A673 (cell line): ENCODE measurements at regions of chr1 and their contacts with region 1.

Region 1: DNA sequence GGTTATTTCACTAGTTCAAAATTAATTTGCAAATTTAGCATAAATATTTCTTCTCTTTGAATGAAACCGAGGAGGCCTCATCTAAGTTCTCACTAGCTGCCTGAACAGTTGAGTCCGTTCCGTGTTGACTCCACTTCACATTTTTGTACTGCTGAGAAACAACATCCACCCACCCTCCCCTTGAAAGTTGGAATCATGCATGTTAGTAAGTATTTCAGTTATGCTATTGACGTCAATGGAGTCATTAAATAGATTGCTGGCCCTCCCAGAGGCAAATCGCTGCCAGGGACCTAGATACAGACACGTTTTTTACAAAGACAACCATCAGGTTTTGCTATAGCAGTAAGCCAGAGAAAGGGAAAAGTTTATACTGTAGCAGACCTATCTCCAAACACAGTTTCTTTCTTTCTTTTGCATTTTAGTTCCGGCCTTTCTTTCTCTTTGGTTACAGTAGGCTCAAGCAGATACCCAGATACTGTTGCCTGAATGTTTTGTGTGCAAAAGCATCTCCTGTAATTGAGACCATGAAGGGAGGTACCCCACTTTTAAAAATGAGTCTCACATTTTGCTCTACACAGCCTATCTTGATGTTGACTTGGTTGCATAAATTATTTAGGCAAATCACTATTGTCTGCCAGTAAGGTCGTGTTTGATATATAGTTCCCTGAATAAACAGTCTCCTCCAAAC is 262.6 kb upstream of the SGIP1 start:
- DNase-seq: peak; percentile 96
- H3K4me3 ChIP-seq: no peak overlapping the region
- H3K27ac ChIP-seq: peak overlapping the region; percentile 87
- H3K4me1 ChIP-seq: peaks cover 58% of the 10 kb centered on the region
- H3K27me3 ChIP-seq: no peaks in the 10 kb centered on the region
- CTCF ChIP-seq: no peak

Region 2: DNA sequence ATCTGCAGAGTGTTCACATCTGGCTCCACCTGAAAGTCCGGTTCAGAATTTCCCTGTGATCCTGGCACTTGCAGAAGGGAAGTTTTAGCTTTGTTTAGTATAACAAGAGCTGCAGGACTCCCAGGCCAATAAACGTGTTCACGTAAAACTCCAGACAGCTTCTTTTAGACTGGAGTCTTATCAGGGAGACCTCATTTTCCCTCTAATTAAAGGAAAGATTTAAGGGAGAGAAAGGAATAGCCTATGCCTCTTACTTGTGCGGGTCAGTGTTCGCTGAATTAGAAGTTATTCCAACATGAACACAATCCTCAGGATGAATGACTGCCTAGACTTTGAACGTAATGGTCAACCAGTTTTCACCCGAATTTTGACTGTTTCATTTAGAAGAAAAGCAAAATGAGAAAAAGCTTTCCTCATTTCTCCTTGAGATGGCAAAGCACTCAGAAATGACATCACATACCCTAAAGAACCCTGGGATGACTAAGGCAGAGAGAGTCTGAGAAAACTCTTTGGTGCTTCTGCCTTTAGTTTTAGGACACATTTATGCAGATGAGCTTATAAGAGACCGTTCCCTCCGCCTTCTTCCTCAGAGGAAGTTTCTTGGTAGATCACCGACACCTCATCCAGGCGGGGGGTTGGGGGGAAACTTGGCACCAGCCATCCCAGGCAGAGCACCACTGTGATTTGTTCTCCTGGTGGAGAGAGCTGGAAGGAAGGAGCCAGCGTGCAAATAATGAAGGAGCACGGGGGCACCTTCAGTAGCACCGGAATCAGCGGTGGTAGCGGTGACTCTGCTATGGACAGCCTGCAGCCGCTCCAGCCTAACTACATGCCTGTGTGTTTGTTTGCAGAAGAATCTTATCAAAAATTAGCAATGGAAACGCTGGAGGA is 60.5 kb after region 1 on chr1:
- CTCF ChIA-PET with region 1: no interaction called
- POLR2A ChIA-PET with region 1: interaction called, 4 read pairs
- intact Hi-C with region 1: loop called (anchors 1 kb)
- DNase-seq: peak; percentile 89
- H3K4me3 ChIP-seq: peak overlapping the region; percentile 54
- H3K27ac ChIP-seq: peak overlapping the region; percentile 84
- H3K4me1 ChIP-seq: peaks cover 50% of the 10 kb centered on the region
- H3K27me3 ChIP-seq: no peaks in the 10 kb centered on the region
- CTCF ChIP-seq: 0 out of 2 replicates have a peak, but pooled peaks have one; percentile 21

Region 3: DNA sequence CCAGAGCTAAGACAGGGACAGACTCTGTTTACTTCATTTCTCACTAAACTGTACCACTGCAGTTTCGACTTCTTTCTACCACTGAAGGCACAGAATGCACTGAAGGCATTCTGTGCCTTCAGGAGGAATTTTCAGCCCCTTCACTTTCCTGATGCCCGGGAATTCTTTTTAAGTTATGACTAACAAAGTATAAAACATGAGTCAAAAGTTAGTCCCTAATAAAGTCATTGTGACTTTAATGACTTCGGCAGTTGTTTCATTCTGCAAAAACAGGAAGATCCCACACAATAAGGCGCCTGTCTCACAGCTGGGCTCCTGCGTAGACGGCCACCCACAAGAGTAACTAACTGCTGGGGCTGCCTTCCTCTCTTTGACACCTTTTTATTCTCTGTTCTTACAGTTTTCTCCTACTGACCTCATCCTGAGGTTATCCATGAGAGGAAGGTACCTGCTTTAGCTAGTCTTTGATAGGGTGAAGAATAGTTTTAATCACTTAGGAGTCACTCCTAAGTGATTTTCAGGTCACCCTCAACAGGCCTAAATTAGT is 78.7 kb after region 1 on chr1:
- CTCF ChIA-PET with region 1: no interaction called
- POLR2A ChIA-PET with region 1: no interaction called
- intact Hi-C with region 1: loop called (anchors 5 kb)
- DNase-seq: peak; percentile 93
- H3K4me3 ChIP-seq: peak overlapping the region; percentile 25
- H3K27ac ChIP-seq: peak overlapping the region; percentile 94
- H3K4me1 ChIP-seq: peaks cover 88% of the 10 kb centered on the region
- H3K27me3 ChIP-seq: no peaks in the 10 kb centered on the region
- CTCF ChIP-seq: no peak

Region 4: DNA sequence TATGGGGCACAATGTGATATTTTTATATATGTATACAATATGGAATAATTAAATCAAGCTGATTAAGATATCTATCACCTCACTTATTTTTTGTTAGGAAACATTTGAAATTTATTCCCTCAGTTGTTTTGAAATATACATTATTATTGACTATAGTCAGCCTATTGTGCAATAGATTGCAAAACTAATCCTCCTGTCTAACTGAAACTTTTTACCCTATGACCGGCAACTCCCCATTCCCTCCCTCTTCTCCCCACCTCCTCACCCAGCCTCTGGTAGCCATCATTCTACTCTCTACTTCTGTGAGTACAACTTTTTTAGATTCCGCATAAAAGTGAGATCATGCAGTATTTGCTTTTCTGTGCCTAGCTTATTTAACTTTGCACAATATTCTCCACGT is 144.9 kb after region 1 on chr1:
- CTCF ChIA-PET with region 1: no interaction called
- POLR2A ChIA-PET with region 1: no interaction called
- intact Hi-C with region 1: no loop called
- DNase-seq: no peak
- H3K4me3 ChIP-seq: no peak overlapping the region
- H3K27ac ChIP-seq: no peak overlapping the region
- H3K4me1 ChIP-seq: no peaks in the 10 kb centered on the region
- H3K27me3 ChIP-seq: no peaks in the 10 kb centered on the region
- CTCF ChIP-seq: no peak